ENCODE measurements at regions of chr22 and their contacts with region 1.

Region 1: DNA sequence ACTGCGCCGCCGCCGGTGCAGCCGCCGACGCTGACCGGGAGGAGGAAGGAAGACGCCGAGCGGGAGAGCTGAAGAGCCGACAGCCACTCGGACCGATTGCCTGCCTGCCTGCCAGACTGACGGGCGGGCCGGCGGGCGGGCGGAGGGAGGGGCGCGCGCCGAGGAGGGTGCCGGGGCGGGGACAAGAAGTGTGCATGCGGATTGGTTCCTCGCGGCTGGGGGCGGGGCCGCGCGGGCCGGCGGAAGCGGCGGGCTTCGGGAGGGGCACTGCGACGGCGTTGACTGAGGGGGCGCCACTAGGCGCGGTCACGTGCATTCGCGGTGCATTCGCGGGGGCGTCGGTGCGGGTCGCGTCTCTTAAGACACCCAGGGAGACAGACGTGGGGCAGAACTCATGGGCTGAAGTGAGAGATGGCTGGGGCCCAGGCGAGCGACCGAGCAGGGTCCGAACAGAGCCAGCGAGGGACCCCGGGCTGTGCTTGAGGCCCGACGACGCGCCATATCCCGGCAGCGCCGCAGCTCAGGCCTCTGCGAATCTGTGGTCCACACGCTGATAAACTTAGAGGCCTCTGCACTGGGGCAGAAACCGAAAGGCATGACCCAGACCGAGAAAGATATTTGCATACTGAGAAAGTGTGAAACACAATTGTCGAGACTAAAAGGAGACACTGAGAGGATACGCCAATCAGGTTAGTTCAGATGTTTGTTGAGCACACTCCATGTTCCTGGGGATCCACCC is at the start of gene MAPK1:
- DNase-seq: peak; percentile 93 to 98
- H3K4me3 ChIP-seq: peak within 1 kb of the TSS; percentile 75 to 92 (median 90)
- H3K27ac ChIP-seq: peak within 1 kb of the TSS; percentile 89 to 100 (median 93)
- H3K4me1 ChIP-seq: peaks cover 24 to 47% (median 38%) of the 10 kb centered on the region in 4 donors
- H3K27me3 ChIP-seq: no peaks in the 10 kb centered on the region
- CTCF ChIP-seq: peak in 2 of 7 experiments; percentile 30 to 38
- EP300 ChIP-seq: no peak
- POLR2A ChIP-seq: peak in 1 of 4 donors; percentile 60
- total RNA-seq, gene MAPK1: 42.0 to 81.6 (median 56.5) TPM

Region 2: GRCh38 chr22:21807544-21808529 is 59.9 kb before region 1 on chr22:
- intact Hi-C with region 1: loop called (anchors 10 kb)
- DNase-seq: peak in 1 of 2 donors; percentile 61
- H3K4me3 ChIP-seq: no peak overlapping the region
- H3K27ac ChIP-seq: no peak overlapping the region
- H3K4me1 ChIP-seq: peaks cover 0 to 37% (median 14%) of the 10 kb centered on the region in 4 donors
- H3K27me3 ChIP-seq: no peaks in the 10 kb centered on the region
- CTCF ChIP-seq: no peak
- EP300 ChIP-seq: no peak
- POLR2A ChIP-seq: no peak